Calu3 (cell line): ENCODE measurements at regions of chr16 and their contacts with region 1.

Region 1: GRCh38 chr16:9119795-9120194 is 28.4 kb downstream of the HAPSTR1 start:
- DNase-seq: no peak
- H3K4me3 Mint-ChIP-seq: no peak overlapping the region
- H3K27ac Mint-ChIP-seq: no peak overlapping the region
- H3K4me1 Mint-ChIP-seq: peaks cover 33% of the 10 kb centered on the region
- H3K27me3 Mint-ChIP-seq: no peaks in the 10 kb centered on the region
- CTCF ChIP-seq: no peak

Region 2: DNA sequence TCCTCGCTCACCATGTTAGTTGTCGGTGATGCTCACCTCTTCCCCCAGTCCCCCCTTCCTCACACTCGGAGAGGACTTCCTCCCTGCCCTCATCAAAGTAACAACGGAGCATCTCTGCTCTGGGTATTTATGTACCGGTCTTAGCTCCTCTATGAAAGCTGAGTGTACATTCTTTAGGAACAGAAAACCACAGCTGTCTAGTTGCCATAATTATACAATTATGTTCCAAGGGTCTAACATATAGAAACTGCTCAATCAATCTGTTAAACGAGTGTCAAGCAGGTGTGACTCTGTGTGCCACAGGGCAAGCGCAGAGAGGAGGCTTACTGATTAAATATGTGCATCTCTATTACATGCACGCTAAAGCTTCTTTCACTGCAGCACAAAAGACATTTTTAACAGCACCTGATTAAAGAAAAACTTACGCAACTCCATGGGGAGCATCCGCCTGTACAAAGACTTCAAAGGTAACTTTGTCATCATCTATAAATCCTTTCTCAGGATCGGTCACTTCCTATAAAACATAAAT is 199.8 kb before region 1 on chr16:
- CTCF ChIA-PET with region 1: no interaction called
- intact Hi-C with region 1: loop called (anchors 10 kb)
- DNase-seq: no peak
- H3K4me3 Mint-ChIP-seq: no peak overlapping the region
- H3K27ac Mint-ChIP-seq: no peak overlapping the region
- H3K4me1 Mint-ChIP-seq: peaks cover 15% of the 10 kb centered on the region
- H3K27me3 Mint-ChIP-seq: no peaks in the 10 kb centered on the region
- CTCF ChIP-seq: no peak